PC-9 (cell line): ENCODE measurements at regions of chr11 and their contacts with region 1.

Region 1: GRCh38 chr11:2532704-2533586 is 88.1 kb downstream of the KCNQ1 start:
- DNase-seq: peak; percentile 65 to 85
- H3K4me3 ChIP-seq: no peak overlapping the region; the same call in 1 of the 2 replicates
- H3K27ac ChIP-seq: peak overlapping the region; percentile 67; the same call in 1 of the 2 replicates
- H3K4me1 ChIP-seq: peaks cover 13% of the 10 kb centered on the region
- H3K27me3 ChIP-seq: peaks cover 14% of the 10 kb centered on the region
- CTCF ChIP-seq: peak; percentile 92

Region 2: GRCh38 chr11:2390725-2391151 is 142.2 kb before region 1 on chr11:
- CTCF ChIA-PET with region 1: no interaction called
- POLR2A ChIA-PET with region 1: no interaction called
- intact Hi-C with region 1: no loop called
- DNase-seq: peak in 1 of 2 experiments; percentile 64
- H3K4me3 ChIP-seq: no peak overlapping the region
- H3K27ac ChIP-seq: no peak overlapping the region
- H3K4me1 ChIP-seq: 0 out of 2 replicates have a peak, but pooled peaks cover 7% of the 10 kb centered on the region
- H3K27me3 ChIP-seq: no peaks in the 10 kb centered on the region
- CTCF ChIP-seq: no peak

Region 3: DNA sequence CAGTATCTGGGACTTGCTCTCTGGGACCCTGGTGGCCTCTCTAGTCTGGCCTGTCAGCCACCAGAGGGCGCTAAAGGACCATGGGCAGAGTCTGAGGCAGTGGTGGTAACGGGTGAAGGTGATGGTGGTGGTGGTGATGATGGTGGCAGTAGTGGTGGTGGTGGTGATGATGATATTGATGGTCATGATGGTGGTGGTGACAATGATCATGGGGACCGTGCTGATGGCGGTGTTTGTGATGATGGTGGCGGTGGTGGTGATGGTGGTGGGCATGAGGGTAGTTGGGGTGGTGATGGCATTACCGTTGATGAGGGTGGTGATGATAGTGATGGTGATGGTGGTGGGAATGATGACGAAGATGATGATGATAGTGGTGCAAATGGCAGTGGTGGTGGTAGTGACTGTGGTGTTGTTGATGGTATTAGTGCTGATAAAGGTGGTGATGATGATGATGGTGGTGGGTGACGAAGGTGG is 104.6 kb before region 1 on chr11:
- CTCF ChIA-PET with region 1: no interaction called
- POLR2A ChIA-PET with region 1: no interaction called
- intact Hi-C with region 1: loop called (anchors 1 kb)
- DNase-seq: peak in 1 of 2 experiments; percentile 54
- H3K4me3 ChIP-seq: no peak overlapping the region
- H3K27ac ChIP-seq: no peak overlapping the region
- H3K4me1 ChIP-seq: no peaks in the 10 kb centered on the region
- H3K27me3 ChIP-seq: peaks cover 27% of the 10 kb centered on the region
- CTCF ChIP-seq: peak; percentile 87

Region 4: GRCh38 chr11:2699531-2700414 is 166.8 kb after region 1 on chr11 and contains the start of gene KCNQ1OT1:
- CTCF ChIA-PET with region 1: no interaction called
- POLR2A ChIA-PET with region 1: no interaction called
- intact Hi-C with region 1: loop called (anchors 10 kb)
- DNase-seq: peak; percentile 87 to 94
- H3K4me3 ChIP-seq: peak within 1 kb of the TSS; percentile 84
- H3K27ac ChIP-seq: peak within 1 kb of the TSS; percentile 79
- H3K4me1 ChIP-seq: peaks cover 14% of the 10 kb centered on the region
- H3K27me3 ChIP-seq: no peaks in the 10 kb centered on the region
- CTCF ChIP-seq: no peak
- total RNA-seq, gene KCNQ1OT1: 3.4 and 4.3 TPM in 2 replicates

Region 5: GRCh38 chr11:2792381-2793250 is 259.7 kb after region 1 on chr11:
- CTCF ChIA-PET with region 1: no interaction called
- POLR2A ChIA-PET with region 1: interaction called, 10 read pairs
- intact Hi-C with region 1: no loop called
- DNase-seq: peak in 1 of 2 experiments; percentile 25
- H3K4me3 ChIP-seq: no peak overlapping the region
- H3K27ac ChIP-seq: no peak overlapping the region
- H3K4me1 ChIP-seq: no peaks in the 10 kb centered on the region
- H3K27me3 ChIP-seq: peaks cover 6% of the 10 kb centered on the region
- CTCF ChIP-seq: no peak

Region 6: DNA sequence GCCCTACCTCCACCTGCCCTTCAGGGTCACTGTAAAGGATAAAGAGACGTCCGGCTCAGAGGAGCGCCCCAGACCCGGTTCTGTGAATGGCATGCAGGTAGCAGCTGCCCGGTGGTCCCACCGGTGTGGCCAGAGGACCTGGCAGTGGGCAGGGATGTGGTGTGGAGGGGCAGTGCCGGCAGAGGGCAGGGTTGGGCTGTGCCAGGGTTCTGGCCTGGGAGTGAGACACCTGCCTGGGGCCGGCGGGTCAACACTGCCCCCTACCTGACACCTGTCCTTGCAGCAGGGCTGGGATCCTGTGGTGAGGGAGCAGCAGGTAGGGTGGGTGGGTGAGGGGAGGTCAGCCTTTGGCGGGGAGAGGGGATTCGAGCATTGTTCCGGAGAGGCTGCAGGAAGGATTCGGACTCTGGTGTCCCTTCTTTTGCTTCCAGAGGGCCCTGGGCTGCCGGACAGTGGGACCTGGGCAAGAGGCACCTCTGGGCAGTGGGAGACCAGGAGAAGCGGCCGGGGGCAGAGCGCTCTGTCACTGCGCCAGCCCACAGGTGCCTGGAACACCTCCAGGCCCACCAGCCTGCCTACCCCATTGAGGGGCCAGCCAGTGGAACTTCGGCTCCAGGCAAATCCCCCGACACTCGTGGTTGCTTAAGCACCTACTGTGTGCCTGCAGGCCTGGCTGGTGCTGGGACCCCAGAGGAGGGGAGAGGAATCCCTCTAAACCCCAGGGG is 397.9 kb after region 1 on chr11:
- CTCF ChIA-PET with region 1: interaction called, 3 read pairs
- POLR2A ChIA-PET with region 1: no interaction called
- intact Hi-C with region 1: loop called (anchors 1 kb)
- DNase-seq: peak; percentile 72 to 87
- H3K4me3 ChIP-seq: peak overlapping the region; percentile 57
- H3K27ac ChIP-seq: peak overlapping the region; percentile 99
- H3K4me1 ChIP-seq: peaks cover 40% of the 10 kb centered on the region
- H3K27me3 ChIP-seq: no peaks in the 10 kb centered on the region
- CTCF ChIP-seq: peak; percentile 83

Region 7: DNA sequence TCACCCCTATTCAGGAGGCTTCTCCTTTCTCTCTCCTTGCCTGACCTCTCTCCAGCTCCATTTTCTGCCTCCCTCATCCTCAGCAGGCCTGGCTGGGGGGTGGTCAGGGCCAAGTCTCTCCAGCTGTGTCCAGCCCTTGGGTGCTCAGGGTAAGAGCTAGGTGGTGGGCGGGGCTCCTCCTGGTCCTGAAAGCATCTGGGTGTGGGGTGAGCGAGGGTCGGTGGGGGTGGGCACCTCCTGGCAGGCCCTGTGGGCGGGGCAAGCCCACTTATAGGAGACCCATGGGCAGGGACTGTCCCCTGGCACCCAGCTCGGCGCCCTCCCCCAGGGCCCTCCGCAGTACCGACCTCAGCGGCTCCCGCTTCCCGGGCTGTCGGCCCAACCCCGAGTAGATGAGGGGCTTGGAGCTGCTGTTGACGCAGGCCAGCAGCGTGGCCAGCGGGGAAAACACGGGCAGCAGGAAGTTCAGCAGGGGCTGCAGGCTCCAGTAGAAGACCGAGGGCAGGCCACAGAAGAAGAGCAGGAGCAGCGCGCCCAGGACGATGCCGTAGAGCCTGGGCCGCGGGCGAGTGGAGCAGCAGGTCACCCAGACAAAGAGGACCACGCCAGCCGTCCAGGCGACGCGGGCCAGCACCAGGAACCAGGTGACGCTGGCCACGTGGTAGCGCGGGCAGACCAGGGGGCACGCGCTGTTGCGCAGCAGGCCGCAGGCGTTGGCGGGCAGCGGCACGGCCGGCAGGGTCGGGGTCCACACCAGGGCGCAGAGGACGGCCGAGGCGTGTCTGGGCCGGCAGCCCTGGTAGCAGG is 684.9 kb after region 1 on chr11:
- CTCF ChIA-PET with region 1: no interaction called
- POLR2A ChIA-PET with region 1: no interaction called
- intact Hi-C with region 1: loop called (anchors 5 kb)
- DNase-seq: no peak
- H3K4me3 ChIP-seq: no peak overlapping the region
- H3K27ac ChIP-seq: no peak overlapping the region
- H3K4me1 ChIP-seq: no peaks in the 10 kb centered on the region
- H3K27me3 ChIP-seq: peaks cover 19% of the 10 kb centered on the region
- CTCF ChIP-seq: no peak